Pancreas (tissue), 10 donors: ENCODE measurements at regions of chr22 and their contacts with region 1.

Region 1: DNA sequence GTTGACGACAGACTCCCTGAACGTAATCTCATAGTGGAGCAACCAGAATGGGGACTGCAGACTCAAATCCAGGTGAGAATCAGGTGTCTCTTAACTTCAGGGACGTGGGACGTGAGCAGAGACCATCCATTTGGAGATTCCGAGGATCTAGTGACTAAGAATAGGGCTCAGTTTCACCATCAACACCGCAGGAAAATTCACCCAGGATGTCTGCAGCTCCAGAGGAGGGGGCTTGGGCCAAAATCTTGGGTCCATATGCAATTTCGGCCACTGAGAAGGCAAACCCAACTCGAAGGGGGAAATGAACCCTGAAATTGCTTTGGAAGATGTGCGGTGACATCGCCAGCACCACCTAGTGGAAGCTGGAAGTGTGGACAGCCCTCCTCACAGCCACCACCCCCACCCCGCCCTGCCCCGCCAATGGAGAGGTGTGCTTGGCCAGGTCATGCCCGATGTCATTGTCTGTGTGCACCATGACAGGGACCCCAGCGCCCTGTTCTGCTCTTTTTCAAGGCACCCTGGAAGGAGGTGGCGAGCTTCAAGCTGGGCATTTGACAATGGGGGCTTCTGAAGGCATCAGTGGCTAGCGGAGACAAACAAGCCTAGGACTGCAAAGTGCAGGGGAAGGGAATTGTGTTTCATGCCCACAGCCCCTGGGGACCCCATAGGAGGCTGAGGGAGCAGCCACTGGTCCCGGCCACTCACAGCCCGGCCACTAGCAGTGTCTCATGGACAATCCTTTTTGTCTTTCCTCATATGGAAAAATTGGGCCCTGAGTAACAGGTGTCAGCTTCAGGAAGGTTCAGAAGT is 24.8 kb downstream of the APOL1 start:
- DNase-seq: peak in 3 of 6 donors; percentile 48 to 68 (median 58)
- ATAC-seq: peak; percentile 62 to 87 (median 84)
- H3K4me3 ChIP-seq: no peak overlapping the region
- H3K27ac ChIP-seq: no peak overlapping the region
- H3K4me1 ChIP-seq: no peaks in the 10 kb centered on the region
- H3K27me3 ChIP-seq: no peaks in the 10 kb centered on the region
- CTCF ChIP-seq: peak; percentile 40 to 59 (median 56)

Region 2: DNA sequence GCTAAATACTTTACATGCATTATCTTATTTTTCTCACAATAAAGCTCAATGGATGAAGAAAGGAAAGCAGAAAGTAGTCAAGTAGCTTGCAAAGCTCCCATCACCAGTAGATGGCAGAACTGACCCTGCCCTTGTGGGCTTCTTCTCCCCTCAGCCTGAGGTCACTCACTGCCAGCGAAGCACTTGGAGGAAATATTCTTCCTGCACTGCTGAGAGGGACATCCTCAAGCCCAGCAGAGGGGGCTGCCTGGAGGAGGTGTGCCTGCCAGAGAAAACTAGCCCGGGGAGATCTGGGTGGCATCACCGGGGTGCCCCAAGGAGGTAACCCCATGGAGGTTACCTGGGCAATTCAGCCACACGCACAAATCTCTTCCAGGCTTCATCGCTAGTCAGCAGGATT is 82.7 kb before region 1 on chr22:
- intact Hi-C with region 1: loop called in 1 of 3 experiments (anchors 10 kb)
- DNase-seq: peak in 2 of 6 donors; percentile 42 to 49
- ATAC-seq: peak; percentile 59 to 92 (median 86)
- H3K4me3 ChIP-seq: no peak overlapping the region
- H3K27ac ChIP-seq: no peak overlapping the region
- H3K4me1 ChIP-seq: no peaks in the 10 kb centered on the region
- H3K27me3 ChIP-seq: no peaks in the 10 kb centered on the region
- CTCF ChIP-seq: peak in 3 of 4 donors; percentile 42 to 55 (median 47)

Region 3: GRCh38 chr22:36546092-36546804 is 268.6 kb after region 1 on chr22:
- intact Hi-C with region 1: no loop called
- DNase-seq: peak in 4 of 6 donors; percentile 31 to 53 (median 42)
- ATAC-seq: peak; percentile 78 to 96 (median 90)
- H3K4me3 ChIP-seq: no peak overlapping the region
- H3K27ac ChIP-seq: no peak overlapping the region
- H3K4me1 ChIP-seq: peaks cover 0 to 3% (median 0%) of the 10 kb centered on the region in 3 donors
- H3K27me3 ChIP-seq: no peaks in the 10 kb centered on the region
- CTCF ChIP-seq: peak; percentile 8 to 42 (median 38)